ENCODE measurements at regions of chr1 and their contacts with region 1.

Region 1: DNA sequence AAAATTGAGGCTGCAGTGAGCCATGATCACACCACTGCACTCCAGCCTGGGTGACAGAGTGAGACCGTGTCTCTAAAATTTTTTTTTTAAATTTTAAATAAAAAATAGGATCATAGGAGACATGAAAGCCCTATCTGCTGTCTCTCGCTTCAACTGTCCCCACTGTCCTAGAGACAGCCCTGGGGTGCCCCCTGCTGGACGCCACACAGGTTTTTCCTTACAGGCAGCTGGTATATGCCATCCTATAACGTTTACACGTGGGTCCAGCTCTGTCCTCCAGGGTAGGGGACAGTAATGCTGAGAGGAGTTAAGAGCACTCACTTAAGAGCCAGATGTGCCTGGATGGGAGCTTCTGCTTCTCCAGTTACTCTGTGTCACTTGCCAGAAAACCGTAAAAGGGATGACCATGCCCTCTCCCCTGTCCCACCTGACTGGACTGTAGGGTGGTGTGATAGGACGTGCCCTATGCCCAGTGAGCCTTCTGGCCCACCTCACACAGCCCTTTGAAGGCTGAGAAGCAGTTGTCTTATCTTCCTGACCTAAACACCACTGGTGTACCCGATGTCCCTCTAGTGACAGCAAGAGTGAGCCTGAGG is 8.5 kb downstream of the FBXO2 start:
- DNase-seq: peak; percentile 77 to 98 (median 92)

Region 2: DNA sequence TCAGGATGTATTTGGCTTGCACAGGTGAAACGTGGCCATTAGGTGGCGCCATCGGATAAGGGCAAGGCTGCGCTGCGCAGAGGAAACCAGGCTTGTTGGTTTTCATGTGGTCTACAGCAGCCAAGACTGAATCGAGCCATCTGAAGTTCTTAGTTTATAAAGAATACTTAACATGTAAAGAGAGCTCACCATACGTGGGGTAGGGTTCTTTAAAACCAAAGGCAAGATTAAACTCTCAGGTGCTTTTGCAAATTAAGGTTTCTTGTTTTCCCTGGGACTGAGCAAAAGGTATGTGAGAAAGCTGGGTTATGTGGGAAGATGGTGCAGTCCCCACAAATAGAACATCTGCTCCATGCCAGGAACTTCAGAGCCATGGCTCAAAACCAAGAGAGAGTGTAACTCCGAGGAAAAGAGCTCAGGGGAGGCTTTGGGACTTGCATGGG is 608.0 kb before region 1 on chr1:
- intact Hi-C with region 1: loop called (anchors 2 kb)
- DNase-seq: peak; percentile 81 to 98 (median 92)

Region 3: DNA sequence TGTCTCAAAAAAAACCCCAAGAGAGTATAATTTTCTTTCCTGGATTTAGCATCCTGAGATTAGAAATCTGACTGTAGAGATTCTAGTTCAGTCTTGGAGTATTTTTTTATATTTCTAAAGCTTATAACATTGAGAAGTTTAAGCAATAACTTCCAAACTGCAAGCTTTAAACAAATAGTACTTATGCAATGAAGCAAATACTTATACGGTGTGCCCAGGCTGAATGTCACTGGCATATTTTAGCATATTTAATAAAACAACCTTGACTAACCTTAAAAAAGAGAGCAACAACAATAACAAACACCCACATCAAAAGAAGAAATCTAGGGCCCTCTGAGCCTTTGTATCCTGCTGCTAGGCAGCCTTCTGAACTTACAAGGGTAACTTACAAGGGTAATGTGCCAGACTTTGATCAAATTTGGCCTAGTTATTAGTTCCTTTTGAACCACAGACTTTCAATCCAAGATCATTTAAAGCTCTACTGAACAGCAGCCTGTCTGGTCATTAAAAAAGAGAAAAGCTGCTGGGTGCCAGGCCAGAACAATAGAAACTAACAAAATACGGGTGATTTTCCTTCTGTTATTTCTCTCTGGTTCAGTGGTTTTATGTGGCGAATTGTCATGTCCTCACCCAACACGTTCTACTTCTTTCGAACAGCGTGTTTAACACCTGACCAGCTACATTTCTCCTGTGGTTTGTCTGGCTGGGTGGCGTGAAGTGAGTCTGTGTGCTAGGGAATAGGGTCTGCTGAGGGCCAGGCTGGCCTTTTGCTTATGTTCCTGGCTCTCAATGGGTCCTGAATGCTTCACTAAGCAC is 399.7 kb before region 1 on chr1:
- intact Hi-C with region 1: loop called (anchors 1 kb)
- DNase-seq: no peak

Region 4: GRCh38 chr1:11272832-11273594 is 372.8 kb before region 1 on chr1 and contains the start of gene UBIAD1:
- intact Hi-C with region 1: loop called (anchors 10 kb)
- DNase-seq: peak; percentile 71 to 97 (median 82)

Region 5: GRCh38 chr1:11478571-11479374 is 167.0 kb before region 1 on chr1 and contains the start of gene DISP3:
- intact Hi-C with region 1: loop called (anchors 5 kb)
- DNase-seq: peak; percentile 60 to 97 (median 86)

Region 6: GRCh38 chr1:11520531-11521233 is 125.1 kb before region 1 on chr1:
- intact Hi-C with region 1: no loop called
- DNase-seq: peak in 3 of 10 donors; percentile 4 to 73 (median 67)

Region 7: GRCh38 chr1:11719313-11720032 is 73.7 kb after region 1 on chr1:
- intact Hi-C with region 1: loop called (anchors 2 kb)
- DNase-seq: peak; percentile 76 to 98 (median 90)

Region 8: DNA sequence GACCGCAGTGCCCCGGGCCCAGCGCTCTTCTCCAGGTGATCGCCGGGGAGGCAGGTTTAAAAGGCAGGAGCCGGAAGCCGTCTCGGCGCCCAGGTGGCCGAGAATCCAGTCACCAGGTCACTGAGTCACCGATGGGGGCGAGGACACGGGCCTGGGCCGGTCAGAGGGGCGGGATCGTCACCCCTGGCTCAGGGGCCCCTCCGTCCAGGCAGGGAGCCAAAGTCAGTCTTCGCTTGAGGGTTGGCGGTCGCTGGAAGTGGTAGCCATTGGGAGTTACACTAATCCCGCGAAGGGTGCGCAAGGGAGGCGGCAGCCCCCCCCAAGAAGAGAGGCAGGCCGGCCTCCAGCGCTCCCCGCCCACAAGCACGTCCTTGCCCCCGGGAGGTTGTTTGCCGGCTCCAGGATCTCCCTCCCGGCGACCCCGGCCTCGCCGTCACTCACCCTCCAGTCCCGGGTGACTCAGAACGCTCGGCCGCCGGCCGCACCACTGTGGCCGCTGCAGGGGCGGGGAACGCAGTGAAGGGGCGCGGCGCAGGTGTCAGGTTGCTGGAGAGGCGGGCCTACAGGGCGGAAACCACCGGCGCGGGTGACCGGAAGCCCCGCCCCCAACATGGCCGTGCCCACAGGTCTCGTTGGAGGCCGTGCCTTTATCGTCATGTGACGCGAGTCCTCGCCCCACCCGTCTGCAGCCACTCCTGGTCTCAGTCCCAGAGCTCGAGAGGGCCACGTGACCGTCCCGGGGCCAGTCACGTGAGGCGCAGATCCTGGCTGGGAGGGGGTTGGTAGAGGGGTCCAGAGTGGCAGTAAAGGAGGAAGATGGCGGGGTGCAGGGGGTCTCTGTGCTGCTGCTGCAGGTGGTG is 159.9 kb after region 1 on chr1 and contains the starts of genes CLCN6 and MTHFR:
- intact Hi-C with region 1: loop called (anchors 10 kb)
- DNase-seq: peak; percentile 98 to 100 (median 99)

Measured in posterior cingulate gyrus (tissue), 11 donors.